Activated CD8-positive, alpha-beta T cell treated with anti-CD3 and anti-CD28 coated beads for 36 hours (primary cell): ENCODE measurements at regions of chr1 and their contacts with region 1.

Region 1: DNA sequence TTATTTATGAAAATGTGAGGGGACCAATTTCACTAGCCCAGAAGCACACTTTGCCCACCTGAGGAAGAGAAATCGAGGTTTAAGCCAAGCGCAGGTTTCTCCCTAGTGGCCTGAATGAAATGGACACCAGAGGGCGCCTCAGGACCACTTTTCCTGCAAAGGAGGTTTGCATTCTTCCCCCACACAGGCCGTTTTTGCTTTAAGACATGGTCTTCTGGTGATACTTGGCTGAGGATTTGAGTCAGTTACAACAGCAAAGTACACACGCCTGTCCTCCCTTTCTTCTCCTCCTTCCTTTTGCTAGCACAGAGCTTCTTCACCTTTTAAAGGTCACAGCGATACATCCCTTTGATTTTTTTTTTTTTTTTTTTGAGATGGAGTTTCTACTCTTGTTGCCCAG is 5.4 kb downstream of the PLA2G2E start:
- DNase-seq: peak; percentile 92
- ATAC-seq: peak; percentile 76
- H3K4me3 Mint-ChIP-seq: no peak overlapping the region
- H3K27ac Mint-ChIP-seq: no peak overlapping the region
- H3K4me1 Mint-ChIP-seq: peaks cover 4% of the 10 kb centered on the region
- H3K27me3 Mint-ChIP-seq: no peaks in the 10 kb centered on the region
- CTCF ChIP-seq: peak; percentile 78

Region 2: GRCh38 chr1:19754482-19754881 is 163.6 kb before region 1 on chr1:
- CTCF ChIA-PET with region 1: no interaction called
- POLR2A ChIA-PET with region 1: no interaction called
- intact Hi-C with region 1: no loop called
- DNase-seq: no peak
- ATAC-seq: no peak
- H3K4me3 Mint-ChIP-seq: no peak overlapping the region
- H3K27ac Mint-ChIP-seq: no peak overlapping the region
- H3K4me1 Mint-ChIP-seq: no peaks in the 10 kb centered on the region
- H3K27me3 Mint-ChIP-seq: no peaks in the 10 kb centered on the region
- CTCF ChIP-seq: no peak

Region 3: GRCh38 chr1:20158358-20159067 is 240.5 kb after region 1 on chr1:
- CTCF ChIA-PET with region 1: interaction called, 86 read pairs
- POLR2A ChIA-PET with region 1: no interaction called
- intact Hi-C with region 1: loop called (anchors 5 kb)
- DNase-seq: peak; percentile 63
- ATAC-seq: no peak
- H3K4me3 Mint-ChIP-seq: no peak overlapping the region
- H3K27ac Mint-ChIP-seq: no peak overlapping the region
- H3K4me1 Mint-ChIP-seq: peaks cover 8% of the 10 kb centered on the region
- H3K27me3 Mint-ChIP-seq: no peaks in the 10 kb centered on the region
- CTCF ChIP-seq: no peak